Pancreas (tissue), 10 donors: ENCODE measurements at regions of chr17 and their contacts with region 1.

Region 1: DNA sequence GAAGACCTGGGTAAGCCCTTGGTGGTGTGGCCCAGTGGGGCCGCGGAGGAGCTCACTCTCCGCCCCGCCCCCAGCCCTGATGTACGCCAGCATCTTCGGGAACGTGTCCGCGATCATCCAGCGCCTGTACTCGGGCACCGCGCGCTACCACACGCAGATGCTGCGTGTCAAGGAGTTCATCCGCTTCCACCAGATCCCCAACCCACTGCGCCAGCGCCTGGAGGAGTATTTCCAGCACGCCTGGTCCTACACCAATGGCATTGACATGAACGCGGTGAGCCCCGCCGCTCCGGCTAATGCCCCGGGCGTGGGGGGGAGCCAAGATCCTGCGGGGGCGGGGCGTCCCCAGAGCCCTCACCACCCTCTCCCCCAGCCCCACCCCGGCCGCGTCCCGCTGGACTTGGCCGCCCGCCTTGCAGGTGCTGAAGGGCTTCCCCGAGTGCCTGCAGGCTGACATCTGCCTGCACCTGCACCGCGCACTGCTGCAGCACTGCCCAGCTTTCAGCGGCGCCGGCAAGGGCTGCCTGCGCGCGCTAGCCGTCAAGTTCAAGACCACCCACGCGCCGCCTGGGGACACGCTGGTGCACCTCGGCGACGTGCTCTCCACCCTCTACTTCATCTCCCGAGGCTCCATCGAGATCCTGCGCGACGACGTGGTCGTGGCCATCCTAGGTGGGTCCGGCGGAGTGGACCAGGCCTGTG is 12.1 kb upstream of the DCAF7 start:
- DNase-seq: peak in 2 of 6 donors; percentile 62 to 63
- ATAC-seq: peak in 1 of 4 donors; percentile 22
- H3K4me3 ChIP-seq: no peak overlapping the region
- H3K27ac ChIP-seq: no peak overlapping the region
- H3K4me1 ChIP-seq: no peaks in the 10 kb centered on the region
- H3K27me3 ChIP-seq: no peaks in the 10 kb centered on the region
- CTCF ChIP-seq: no peak

Region 2: GRCh38 chr17:63587770-63588169 is 49.6 kb after region 1 on chr17:
- intact Hi-C with region 1: loop called in 1 of 3 experiments (anchors 5 kb)
- DNase-seq: no peak
- ATAC-seq: no peak
- H3K4me3 ChIP-seq: no peak overlapping the region
- H3K27ac ChIP-seq: no peak overlapping the region
- H3K4me1 ChIP-seq: no peaks in the 10 kb centered on the region
- H3K27me3 ChIP-seq: no peaks in the 10 kb centered on the region
- CTCF ChIP-seq: no peak